CD8-positive, alpha-beta T cell (primary cell): ENCODE measurements at regions of chr2 and their contacts with region 1.

Region 1: DNA sequence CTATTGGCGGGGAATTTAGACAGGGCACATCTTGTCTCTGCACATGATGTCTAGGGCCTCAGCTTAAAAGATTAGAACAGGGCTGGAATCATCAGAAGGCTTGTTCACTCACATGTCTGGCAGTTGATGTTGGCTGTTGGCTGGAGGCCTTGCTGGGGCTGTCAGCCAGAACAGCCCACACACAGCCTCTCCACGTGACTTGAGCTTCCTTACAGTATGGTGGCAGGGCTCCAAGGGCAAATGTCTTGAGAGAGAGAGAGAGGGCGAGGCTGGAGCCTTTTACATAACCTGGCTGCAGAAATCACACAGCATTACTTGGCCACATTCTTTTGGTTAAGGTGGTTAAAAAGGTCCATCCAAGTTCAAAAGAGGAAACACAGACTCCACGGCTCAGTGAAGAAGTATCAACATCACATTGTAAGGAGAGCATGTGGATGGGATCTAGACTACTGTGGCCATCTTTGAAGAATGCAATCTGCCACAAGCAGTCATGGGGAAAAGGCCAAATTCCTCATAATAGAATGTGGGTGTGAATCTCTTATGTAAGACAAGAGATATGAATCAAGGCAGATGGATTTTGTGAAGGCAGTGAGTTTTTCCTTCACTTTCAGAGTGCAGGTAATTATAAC is 30.4 kb downstream of the SRSF7 start:
- DNase-seq: no peak
- ATAC-seq: no peak
- H3K4me3 ChIP-seq: no peak overlapping the region
- H3K4me3 Mint-ChIP-seq: no peak overlapping the region
- H3K27ac ChIP-seq: no peak overlapping the region
- H3K27ac Mint-ChIP-seq: peak overlapping the region; percentile 25
- H3K4me1 ChIP-seq: peaks cover 13% of the 10 kb centered on the region
- H3K4me1 Mint-ChIP-seq: peaks cover 30% of the 10 kb centered on the region
- H3K27me3 ChIP-seq: no peaks in the 10 kb centered on the region
- H3K27me3 Mint-ChIP-seq: no peaks in the 10 kb centered on the region
- CTCF ChIP-seq: no peak

Region 2: GRCh38 chr2:38682008-38682575 is 38.6 kb before region 1 on chr2:
- CTCF ChIA-PET with region 1: interaction called, 3 read pairs
- POLR2A ChIA-PET with region 1: no interaction called
- intact Hi-C with region 1: loop called (anchors 5 kb)
- DNase-seq: peak in 2 of 9 experiments; percentile 62 to 72
- ATAC-seq: peak; percentile 80
- H3K4me3 ChIP-seq: no peak overlapping the region
- H3K4me3 Mint-ChIP-seq: peak overlapping the region; percentile 42
- H3K27ac ChIP-seq: peak overlapping the region in 1 of 2 experiments; percentile 76
- H3K27ac Mint-ChIP-seq: peak overlapping the region; percentile 87
- H3K4me1 ChIP-seq: peaks cover 4% of the 10 kb centered on the region
- H3K4me1 Mint-ChIP-seq: peaks cover 26% of the 10 kb centered on the region
- H3K27me3 ChIP-seq: no peaks in the 10 kb centered on the region
- H3K27me3 Mint-ChIP-seq: no peaks in the 10 kb centered on the region
- CTCF ChIP-seq: no peak

Region 3: GRCh38 chr2:38697125-38697840 is 23.4 kb before region 1 on chr2:
- CTCF ChIA-PET with region 1: no interaction called
- POLR2A ChIA-PET with region 1: no interaction called
- intact Hi-C with region 1: no loop called
- DNase-seq: peak in 7 of 9 experiments; percentile 20 to 88 (median 52)
- ATAC-seq: peak; percentile 72
- H3K4me3 ChIP-seq: no peak overlapping the region
- H3K4me3 Mint-ChIP-seq: peak overlapping the region; percentile 11
- H3K27ac ChIP-seq: peak overlapping the region in 1 of 2 experiments; percentile 70
- H3K27ac Mint-ChIP-seq: peak overlapping the region; percentile 85
- H3K4me1 ChIP-seq: no peaks in the 10 kb centered on the region
- H3K4me1 Mint-ChIP-seq: peaks cover 48% of the 10 kb centered on the region
- H3K27me3 ChIP-seq: no peaks in the 10 kb centered on the region
- H3K27me3 Mint-ChIP-seq: no peaks in the 10 kb centered on the region
- CTCF ChIP-seq: no peak

Region 4: GRCh38 chr2:38734299-38735058 is 13.8 kb after region 1 on chr2:
- CTCF ChIA-PET with region 1: interaction called, 11 read pairs
- POLR2A ChIA-PET with region 1: no interaction called
- intact Hi-C with region 1: no loop called
- DNase-seq: no peak
- ATAC-seq: no peak
- H3K4me3 ChIP-seq: no peak overlapping the region
- H3K4me3 Mint-ChIP-seq: no peak overlapping the region
- H3K27ac ChIP-seq: no peak overlapping the region
- H3K27ac Mint-ChIP-seq: no peak overlapping the region
- H3K4me1 ChIP-seq: no peaks in the 10 kb centered on the region
- H3K4me1 Mint-ChIP-seq: peaks cover 7% of the 10 kb centered on the region
- H3K27me3 ChIP-seq: no peaks in the 10 kb centered on the region
- H3K27me3 Mint-ChIP-seq: no peaks in the 10 kb centered on the region
- CTCF ChIP-seq: no peak